Activated CD4-positive, alpha-beta memory T cell treated with anti-CD3 and anti-CD28 coated beads for 36 hours (primary cell): ENCODE measurements at regions of chr15 and their contacts with region 1.

Region 1: DNA sequence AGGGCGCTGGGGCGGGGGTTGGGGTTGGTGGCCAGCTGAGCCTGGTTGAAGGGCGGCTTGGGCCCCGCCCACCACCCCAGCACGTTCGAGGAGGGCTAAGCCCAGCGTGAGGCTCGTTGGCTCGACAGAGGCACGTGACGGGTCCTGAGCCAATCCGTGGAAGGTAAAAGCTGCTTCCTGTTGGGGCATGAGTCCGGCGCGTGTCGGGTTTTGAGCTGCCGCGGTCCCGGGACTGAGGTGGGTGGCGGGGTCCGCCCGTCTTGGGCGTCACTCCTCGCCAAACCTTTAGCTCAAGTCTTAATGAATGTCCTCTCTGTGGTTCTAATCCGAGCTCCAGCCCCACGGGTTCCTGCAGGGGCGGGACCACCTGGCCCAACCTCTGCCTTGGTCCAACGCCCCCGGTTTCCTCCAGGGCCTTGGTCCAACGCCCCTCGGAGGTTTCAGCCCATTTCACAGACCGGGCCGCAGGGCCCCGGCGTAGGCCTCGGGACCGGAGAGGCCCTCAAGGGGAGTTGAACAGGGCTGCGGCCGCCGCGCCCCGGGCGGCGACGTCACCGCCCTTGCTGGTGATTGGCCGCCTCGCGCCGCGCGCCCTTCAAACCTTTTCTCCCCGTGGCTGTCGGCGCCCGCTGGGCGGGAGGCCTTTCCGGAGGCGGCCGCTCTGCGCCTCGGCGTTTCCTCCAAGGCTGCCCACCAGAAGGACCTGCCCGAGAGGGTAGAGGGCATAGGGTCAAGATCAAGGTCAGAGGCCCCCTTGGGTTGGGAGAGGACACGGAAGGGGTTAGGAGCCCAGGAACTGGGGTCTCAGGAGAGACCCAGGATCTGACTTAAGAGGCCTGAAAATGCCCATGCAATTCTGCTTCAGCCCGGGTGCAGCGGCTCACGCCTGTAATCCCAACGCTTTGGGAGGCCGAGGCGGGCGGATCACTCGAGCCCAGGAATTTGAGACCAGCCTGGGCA is at the start of gene RCCD1:
- DNase-seq: peak; percentile 96
- H3K4me3 Mint-ChIP-seq: peak within 1 kb of the TSS; percentile 87
- H3K27ac Mint-ChIP-seq: peak within 1 kb of the TSS; percentile 94
- H3K4me1 Mint-ChIP-seq: peaks cover 14% of the 10 kb centered on the region
- H3K27me3 Mint-ChIP-seq: no peaks in the 10 kb centered on the region
- total RNA-seq, gene RCCD1: 39.9 to 41.4 TPM

Region 2: GRCh38 chr15:90638201-90638691 is 316.7 kb before region 1 on chr15:
- CTCF ChIA-PET with region 1: no interaction called
- POLR2A ChIA-PET with region 1: no interaction called
- intact Hi-C with region 1: no loop called
- DNase-seq: no peak
- H3K4me3 Mint-ChIP-seq: no peak overlapping the region
- H3K27ac Mint-ChIP-seq: no peak overlapping the region
- H3K4me1 Mint-ChIP-seq: peaks cover 5% of the 10 kb centered on the region
- H3K27me3 Mint-ChIP-seq: no peaks in the 10 kb centered on the region

Region 3: GRCh38 chr15:90937898-90938660 is 16.9 kb before region 1 on chr15:
- CTCF ChIA-PET with region 1: interaction called, 106 read pairs
- POLR2A ChIA-PET with region 1: interaction called, 28 read pairs
- intact Hi-C with region 1: loop called (anchors 1 kb)
- DNase-seq: no peak
- H3K4me3 Mint-ChIP-seq: no peak overlapping the region
- H3K27ac Mint-ChIP-seq: no peak overlapping the region
- H3K4me1 Mint-ChIP-seq: peaks cover 20% of the 10 kb centered on the region
- H3K27me3 Mint-ChIP-seq: no peaks in the 10 kb centered on the region

Region 4: GRCh38 chr15:90982135-90982534 is 27.1 kb after region 1 on chr15:
- CTCF ChIA-PET with region 1: interaction called, 10 read pairs
- POLR2A ChIA-PET with region 1: interaction called, 3 read pairs
- intact Hi-C with region 1: no loop called
- DNase-seq: no peak
- H3K4me3 Mint-ChIP-seq: no peak overlapping the region
- H3K27ac Mint-ChIP-seq: no peak overlapping the region
- H3K4me1 Mint-ChIP-seq: peaks cover 18% of the 10 kb centered on the region
- H3K27me3 Mint-ChIP-seq: no peaks in the 10 kb centered on the region

Region 5: DNA sequence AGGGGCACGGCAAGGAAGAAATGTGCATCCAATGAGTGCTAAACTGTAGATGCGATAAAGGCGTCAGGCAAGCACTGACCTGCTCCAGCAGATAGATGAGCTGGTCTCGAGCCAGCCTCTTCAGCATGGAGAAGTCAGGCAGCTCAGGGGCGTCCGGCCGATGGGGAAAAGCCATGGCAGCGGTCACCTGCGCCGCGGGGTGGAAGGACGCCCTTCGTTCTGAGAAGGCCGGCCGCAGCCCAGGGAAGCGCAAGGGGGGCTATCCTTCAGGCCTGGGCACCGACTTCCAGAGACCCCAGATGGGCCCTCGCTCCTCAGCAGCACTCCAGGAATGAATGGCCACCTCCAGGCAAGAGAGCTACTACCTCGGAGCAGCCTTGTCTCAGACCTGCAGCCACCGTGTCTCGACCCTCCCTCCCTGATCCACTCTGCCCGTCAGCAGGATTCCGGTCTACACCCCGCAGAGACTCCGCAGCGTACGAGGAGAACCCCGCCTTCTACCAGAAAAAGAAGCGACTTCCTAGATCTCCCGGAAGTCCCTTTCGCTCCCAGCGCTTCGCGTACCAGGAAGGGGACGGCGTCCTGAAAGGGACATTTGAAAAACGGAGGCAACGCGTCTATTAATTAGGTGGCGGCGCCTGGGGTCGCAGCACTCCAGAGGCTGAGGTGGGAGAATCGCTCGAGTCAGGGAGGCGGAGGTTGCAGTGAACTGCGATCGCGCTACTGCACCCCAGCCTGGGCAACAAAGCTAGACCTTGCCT is 67.3 kb after region 1 on chr15 and contains the start of gene VPS33B:
- CTCF ChIA-PET with region 1: interaction called, 9 read pairs
- POLR2A ChIA-PET with region 1: interaction called, 4 read pairs
- intact Hi-C with region 1: loop called (anchors 1 kb)
- DNase-seq: peak; percentile 87
- H3K4me3 Mint-ChIP-seq: peak within 1 kb of the TSS; percentile 89
- H3K27ac Mint-ChIP-seq: peak within 1 kb of the TSS; percentile 90
- H3K4me1 Mint-ChIP-seq: peaks cover 32% of the 10 kb centered on the region
- H3K27me3 Mint-ChIP-seq: no peaks in the 10 kb centered on the region
- total RNA-seq, gene VPS33B: 26.4 to 26.5 TPM

Region 6: DNA sequence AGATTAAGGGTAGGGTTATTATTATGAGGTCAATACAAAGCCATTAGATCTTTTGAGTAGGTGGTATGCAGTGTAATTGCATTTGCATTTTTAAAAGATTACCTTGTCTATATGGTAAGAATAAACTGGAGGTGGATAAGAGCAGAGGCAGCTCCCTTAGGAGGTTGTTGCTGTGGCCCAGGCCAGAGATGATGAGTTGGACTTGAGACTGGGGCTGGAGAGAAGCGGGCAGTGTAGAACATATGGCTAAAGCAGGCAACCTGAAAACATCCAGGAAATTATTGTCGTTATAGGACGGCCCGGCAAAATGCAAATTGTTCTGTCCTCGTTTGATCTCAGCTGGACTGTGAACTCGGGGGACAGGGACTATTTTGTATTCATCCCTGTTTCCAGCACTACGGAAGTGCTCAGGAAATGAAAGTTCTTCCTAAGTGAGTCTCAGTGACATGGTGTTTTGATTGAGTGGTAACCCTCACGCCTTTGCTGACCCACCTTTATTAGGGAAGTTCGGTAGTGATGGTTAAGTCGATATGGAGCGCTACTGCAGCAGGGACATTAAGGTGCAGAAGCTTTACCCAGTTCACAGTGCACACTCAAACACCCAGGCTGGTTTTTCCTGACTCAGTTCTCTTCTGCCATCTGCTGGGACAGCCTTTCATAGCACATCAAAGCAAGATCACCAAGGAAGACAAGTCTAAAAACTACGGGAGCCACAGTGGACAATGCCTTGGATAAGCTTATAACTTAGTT is 94.6 kb after region 1 on chr15:
- CTCF ChIA-PET with region 1: interaction called, 32 read pairs
- POLR2A ChIA-PET with region 1: no interaction called
- intact Hi-C with region 1: loop called (anchors 1 kb)
- DNase-seq: peak; percentile 72
- H3K4me3 Mint-ChIP-seq: no peak overlapping the region
- H3K27ac Mint-ChIP-seq: no peak overlapping the region
- H3K4me1 Mint-ChIP-seq: peaks cover 16% of the 10 kb centered on the region
- H3K27me3 Mint-ChIP-seq: peaks cover 9% of the 10 kb centered on the region